Activated CD4-positive, alpha-beta T cell treated with anti-CD3 and anti-CD28 coated beads for 36 hours (primary cell): ENCODE measurements at regions of chr3 and their contacts with region 1.

Region 1: GRCh38 chr3:183377307-183377959 is 51.0 kb downstream of the MCF2L2 start:
- DNase-seq: peak; percentile 24
- ATAC-seq: peak; percentile 77
- H3K4me3 Mint-ChIP-seq: no peak overlapping the region
- H3K27ac Mint-ChIP-seq: peak overlapping the region; percentile 58
- H3K4me1 Mint-ChIP-seq: peaks cover 43% of the 10 kb centered on the region
- H3K27me3 Mint-ChIP-seq: no peaks in the 10 kb centered on the region

Region 2: GRCh38 chr3:183178629-183179549 is 198.5 kb before region 1 on chr3:
- CTCF ChIA-PET with region 1: interaction called, 257 read pairs
- POLR2A ChIA-PET with region 1: no interaction called
- intact Hi-C with region 1: loop called (anchors 1 kb)
- DNase-seq: peak; percentile 82
- ATAC-seq: peak; percentile 82
- H3K4me3 Mint-ChIP-seq: peak overlapping the region; percentile 70
- H3K27ac Mint-ChIP-seq: no peak overlapping the region
- H3K4me1 Mint-ChIP-seq: peaks cover 7% of the 10 kb centered on the region
- H3K27me3 Mint-ChIP-seq: peaks cover 25% of the 10 kb centered on the region

Region 3: GRCh38 chr3:183252973-183253901 is 124.2 kb before region 1 on chr3 and contains the start of gene B3GNT5:
- CTCF ChIA-PET with region 1: interaction called, 5 read pairs
- POLR2A ChIA-PET with region 1: no interaction called
- intact Hi-C with region 1: loop called (anchors 1 to 2 kb)
- DNase-seq: peak; percentile 76
- ATAC-seq: peak; percentile 56
- H3K4me3 Mint-ChIP-seq: peak within 1 kb of the TSS; percentile 77
- H3K27ac Mint-ChIP-seq: peak within 1 kb of the TSS; percentile 79
- H3K4me1 Mint-ChIP-seq: peaks cover 29% of the 10 kb centered on the region
- H3K27me3 Mint-ChIP-seq: peaks cover 14% of the 10 kb centered on the region
- total RNA-seq, gene B3GNT5: 20.2 to 22.8 TPM